Dendritic cell treated with granulocyte-macrophage colony-stimulating factor and Interleukin-4, amounts not matched to agents 40 ng/mL and 50 ng/mL, for 4 days (primary cell): ENCODE measurements at regions of chr7 and their contacts with region 1.

Region 1: GRCh38 chr7:81956520-81956919 is 186.7 kb upstream of the HGF start:
- H3K4me3 Mint-ChIP-seq: no peak overlapping the region
- H3K27ac Mint-ChIP-seq: no peak overlapping the region
- H3K4me1 Mint-ChIP-seq: peaks cover 9% of the 10 kb centered on the region
- H3K27me3 Mint-ChIP-seq: no peaks in the 10 kb centered on the region

Region 2: GRCh38 chr7:81482600-81483186 is 473.8 kb before region 1 on chr7:
- intact Hi-C with region 1: loop called (anchors 5 kb)
- H3K4me3 Mint-ChIP-seq: no peak overlapping the region
- H3K27ac Mint-ChIP-seq: no peak overlapping the region
- H3K4me1 Mint-ChIP-seq: peaks cover 5% of the 10 kb centered on the region
- H3K27me3 Mint-ChIP-seq: no peaks in the 10 kb centered on the region

Region 3: DNA sequence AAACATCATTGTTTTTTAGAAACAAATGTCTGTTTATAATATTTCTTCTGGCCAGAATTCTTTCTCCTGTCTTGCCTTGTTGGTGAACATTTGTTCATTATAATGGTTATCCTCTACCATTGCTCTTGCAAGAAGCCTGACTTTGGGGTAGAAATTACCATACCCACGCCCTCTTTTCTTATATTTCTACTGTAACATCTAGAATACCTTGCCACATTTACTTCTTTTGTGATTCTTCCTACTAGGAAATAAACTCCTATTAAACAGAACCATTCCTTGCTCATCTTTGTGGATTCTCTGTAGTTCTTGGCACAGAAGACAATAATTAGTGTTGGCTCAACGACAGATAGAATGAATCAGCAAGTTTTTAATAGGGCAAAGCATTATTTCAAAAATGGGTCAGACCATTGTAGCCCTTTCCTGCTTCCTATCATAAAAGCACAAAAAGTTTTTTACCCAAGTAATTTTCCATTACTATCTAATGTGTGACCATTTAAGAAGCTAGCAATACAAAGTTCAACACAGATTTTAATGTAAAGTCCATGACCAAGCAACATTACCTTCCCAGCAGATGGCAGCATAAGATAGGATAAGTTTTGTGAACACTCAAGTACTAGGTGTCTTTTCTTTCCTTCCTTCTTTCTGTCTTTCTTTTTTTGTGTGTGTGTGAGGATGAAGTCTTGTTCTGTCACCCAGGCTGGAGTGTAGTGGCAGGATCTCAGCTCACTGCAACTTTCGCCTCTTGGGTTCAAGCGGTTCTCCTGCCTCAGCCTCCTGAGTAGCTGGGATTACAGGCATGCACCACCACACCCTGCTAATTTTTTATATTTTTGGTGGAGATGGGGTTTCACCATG is 457.0 kb before region 1 on chr7:
- intact Hi-C with region 1: loop called (anchors 1 kb)
- H3K4me3 Mint-ChIP-seq: no peak overlapping the region
- H3K27ac Mint-ChIP-seq: no peak overlapping the region
- H3K4me1 Mint-ChIP-seq: peaks cover 14% of the 10 kb centered on the region
- H3K27me3 Mint-ChIP-seq: no peaks in the 10 kb centered on the region

Region 4: DNA sequence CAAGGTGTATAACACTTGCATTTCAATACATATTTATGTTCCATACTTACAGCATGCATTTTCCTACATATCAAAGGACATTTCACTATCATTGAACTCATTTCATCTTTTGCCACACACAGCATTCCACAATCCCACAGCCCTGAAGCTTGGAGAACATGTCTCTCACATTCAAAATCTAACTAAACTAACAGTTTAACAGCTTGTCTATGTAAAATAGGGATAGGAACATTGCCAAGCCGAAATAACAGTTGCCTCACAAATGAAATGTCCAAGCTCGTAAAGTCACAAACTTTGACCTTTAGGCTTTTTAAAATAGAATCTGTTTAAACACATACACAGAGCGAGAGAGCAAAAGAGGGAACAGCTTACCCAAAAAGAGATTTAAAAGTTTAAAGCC is 251.9 kb before region 1 on chr7:
- intact Hi-C with region 1: loop called (anchors 10 kb)
- H3K4me3 Mint-ChIP-seq: no peak overlapping the region
- H3K27ac Mint-ChIP-seq: no peak overlapping the region
- H3K4me1 Mint-ChIP-seq: no peaks in the 10 kb centered on the region
- H3K27me3 Mint-ChIP-seq: no peaks in the 10 kb centered on the region

Region 5: DNA sequence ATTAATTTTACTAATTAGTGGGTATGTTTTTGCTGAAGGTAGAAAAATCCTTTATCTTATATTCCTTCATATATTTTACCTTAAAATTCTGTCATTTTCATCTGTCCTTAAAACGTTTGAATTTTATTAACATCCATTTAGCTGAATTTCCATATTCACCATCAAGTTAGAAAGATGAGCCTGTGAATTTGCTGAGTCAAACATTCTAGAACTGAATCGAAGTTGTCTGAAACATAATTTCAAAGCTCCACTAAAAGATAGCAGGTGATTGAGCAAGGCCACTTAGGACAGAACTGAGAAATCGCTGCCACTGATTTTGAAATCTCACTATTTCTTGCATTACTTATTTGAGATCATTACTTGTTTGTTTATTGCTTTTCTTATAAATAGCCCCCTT is 204.2 kb before region 1 on chr7:
- intact Hi-C with region 1: loop called (anchors 5 kb)
- H3K4me3 Mint-ChIP-seq: no peak overlapping the region
- H3K27ac Mint-ChIP-seq: no peak overlapping the region
- H3K4me1 Mint-ChIP-seq: peaks cover 7% of the 10 kb centered on the region
- H3K27me3 Mint-ChIP-seq: no peaks in the 10 kb centered on the region

Region 6: GRCh38 chr7:82017334-82017943 is 60.9 kb after region 1 on chr7:
- intact Hi-C with region 1: loop called (anchors 5 kb)
- H3K4me3 Mint-ChIP-seq: no peak overlapping the region
- H3K27ac Mint-ChIP-seq: no peak overlapping the region
- H3K4me1 Mint-ChIP-seq: no peaks in the 10 kb centered on the region
- H3K27me3 Mint-ChIP-seq: no peaks in the 10 kb centered on the region

Region 7: GRCh38 chr7:82494420-82494819 is 537.9 kb after region 1 on chr7:
- intact Hi-C with region 1: no loop called
- H3K4me3 Mint-ChIP-seq: no peak overlapping the region
- H3K27ac Mint-ChIP-seq: no peak overlapping the region
- H3K4me1 Mint-ChIP-seq: no peaks in the 10 kb centered on the region
- H3K27me3 Mint-ChIP-seq: no peaks in the 10 kb centered on the region